Caco-2 (cell line): ENCODE measurements at regions of chr19 and their contacts with region 1.

Region 1: DNA sequence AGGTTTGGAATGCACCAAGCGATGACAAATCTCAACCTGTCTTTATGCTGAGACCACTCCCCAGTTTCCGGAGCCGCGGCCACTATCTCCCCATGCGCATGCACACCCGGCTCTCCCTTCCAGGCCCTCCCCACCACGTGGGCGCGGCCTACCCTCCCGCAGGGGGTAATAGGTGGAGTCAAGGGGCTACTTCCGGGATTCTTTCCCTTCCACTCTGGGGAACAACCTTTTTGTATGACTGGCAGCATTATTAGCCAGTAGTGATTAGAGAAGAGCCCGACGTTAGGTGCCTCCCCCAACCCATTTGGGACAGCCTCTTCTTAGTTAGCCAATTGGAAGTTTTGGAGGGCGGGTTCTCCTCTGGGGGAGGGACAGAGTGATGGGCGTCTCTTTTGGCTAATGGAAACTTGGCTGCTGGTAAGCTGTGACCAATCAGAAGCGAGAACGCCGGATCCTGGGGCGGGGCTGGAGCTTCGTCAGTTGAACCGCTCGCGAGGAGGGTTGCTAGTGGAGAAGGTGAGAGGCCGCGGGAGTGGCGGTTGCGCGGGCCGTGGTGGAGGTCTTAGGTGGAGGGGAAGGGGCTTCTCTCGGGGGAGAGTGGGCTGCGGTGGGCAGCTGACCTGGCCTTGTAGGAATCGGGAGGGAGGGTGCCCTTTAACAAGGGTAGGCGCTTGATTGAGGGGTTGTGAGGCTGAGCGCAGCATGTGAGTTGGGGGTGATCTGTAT is at the start of gene CCDC61:
- DNase-seq: peak; percentile 98 to 99
- H3K4me3 ChIP-seq: peak within 1 kb of the TSS; percentile 49
- H3K4me3 Mint-ChIP-seq: no peak within 1 kb of the TSS
- H3K27ac Mint-ChIP-seq: no peak within 1 kb of the TSS
- H3K4me1 ChIP-seq: no peaks in the 10 kb centered on the region
- H3K4me1 Mint-ChIP-seq: peaks cover 5% of the 10 kb centered on the region
- H3K27me3 ChIP-seq: no peaks in the 10 kb centered on the region
- H3K27me3 Mint-ChIP-seq: peaks cover 4% of the 10 kb centered on the region
- CTCF ChIP-seq: no peak
- total RNA-seq, gene CCDC61: 17.1 and 21.1 TPM in 2 replicates

Region 2: GRCh38 chr19:45902651-45903625 is 92.2 kb before region 1 on chr19:
- CTCF ChIA-PET with region 1: no interaction called
- POLR2A ChIA-PET with region 1: interaction called, 10 read pairs
- intact Hi-C with region 1: no loop called
- DNase-seq: peak; percentile 98 to 100
- H3K4me3 ChIP-seq: peak overlapping the region; percentile 92
- H3K4me3 Mint-ChIP-seq: peak overlapping the region; percentile 80
- H3K27ac Mint-ChIP-seq: peak overlapping the region; percentile 65
- H3K4me1 ChIP-seq: peaks cover 5% of the 10 kb centered on the region
- H3K4me1 Mint-ChIP-seq: no peaks in the 10 kb centered on the region
- H3K27me3 ChIP-seq: no peaks in the 10 kb centered on the region
- H3K27me3 Mint-ChIP-seq: no peaks in the 10 kb centered on the region
- CTCF ChIP-seq: no peak